WTC11 (cell line): ENCODE measurements at regions of chr1 and their contacts with region 1.

Region 1: DNA sequence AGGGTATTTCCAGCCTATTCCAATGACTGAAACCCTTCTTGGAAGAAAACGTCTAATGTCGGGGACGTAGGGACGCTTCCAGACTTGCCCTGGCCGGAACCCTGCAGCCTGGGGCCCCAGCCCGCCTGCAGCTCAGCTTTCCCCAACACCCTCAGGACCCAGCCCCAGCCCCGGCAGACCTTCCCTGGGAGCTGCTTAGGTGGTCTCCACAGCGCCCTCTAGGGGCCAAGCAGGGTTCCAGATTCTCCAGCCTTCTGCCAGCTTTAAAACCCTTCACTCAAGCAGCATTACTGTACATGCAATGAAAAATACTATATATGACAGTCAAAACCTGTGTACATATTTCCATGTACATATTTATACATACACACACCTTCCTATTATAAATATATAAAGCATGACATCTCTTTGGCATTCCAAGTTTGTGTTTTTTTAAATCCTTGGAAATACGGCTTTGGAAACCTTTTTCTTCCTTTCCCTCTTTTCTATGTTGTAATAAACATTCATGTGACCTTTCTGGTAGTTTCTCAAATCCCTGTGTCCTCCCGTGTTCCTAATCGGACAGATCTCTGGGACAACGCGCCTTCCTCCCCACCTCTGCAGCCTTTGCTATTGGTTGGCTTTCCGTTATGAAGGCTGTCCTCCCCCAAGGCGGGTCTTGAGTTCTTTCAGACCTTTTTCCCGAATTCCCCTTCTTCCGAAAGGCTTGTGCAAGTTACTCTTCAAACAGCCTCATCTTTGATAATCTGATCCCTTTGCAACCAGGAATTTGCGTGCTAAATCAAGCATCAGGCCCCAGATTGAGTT is 60.3 kb downstream of the STUM start:
- DNase-seq: peak; percentile 86
- ATAC-seq: peak; percentile 66
- H3K4me3 Mint-ChIP-seq: no peak overlapping the region; the same call in 1 of the 2 replicates
- H3K27ac Mint-ChIP-seq: no peak overlapping the region
- H3K4me1 Mint-ChIP-seq: peaks cover 43% of the 10 kb centered on the region
- H3K27me3 Mint-ChIP-seq: no peaks in the 10 kb centered on the region; the same call in none of the 2 replicates
- CTCF ChIP-seq: peak; percentile 93

Region 2: GRCh38 chr1:226424228-226425003 is 184.5 kb before region 1 on chr1:
- CTCF ChIA-PET with region 1: interaction called, 10 read pairs
- POLR2A ChIA-PET with region 1: no interaction called
- DNase-seq: no peak
- ATAC-seq: peak; percentile 75
- H3K4me3 Mint-ChIP-seq: no peak overlapping the region
- H3K27ac Mint-ChIP-seq: no peak overlapping the region
- H3K4me1 Mint-ChIP-seq: peaks cover 10% of the 10 kb centered on the region
- H3K27me3 Mint-ChIP-seq: no peaks in the 10 kb centered on the region; the same call in 1 of the 2 replicates
- CTCF ChIP-seq: no peak

Region 3: GRCh38 chr1:226569879-226570547 is 38.9 kb before region 1 on chr1:
- CTCF ChIA-PET with region 1: interaction called, 60 read pairs
- POLR2A ChIA-PET with region 1: no interaction called
- DNase-seq: peak; percentile 77
- ATAC-seq: peak; percentile 94
- H3K4me3 Mint-ChIP-seq: no peak overlapping the region
- H3K27ac Mint-ChIP-seq: no peak overlapping the region
- H3K4me1 Mint-ChIP-seq: peaks cover 13% of the 10 kb centered on the region
- H3K27me3 Mint-ChIP-seq: no peaks in the 10 kb centered on the region; the same call in 1 of the 2 replicates
- CTCF ChIP-seq: no peak